Cardiac septum (tissue), 1 donor: ENCODE measurements at regions of chr6 and their contacts with region 1.

Region 1: GRCh38 chr6:17932330-17932852 is 55.0 kb downstream of the KIF13A start:
- DNase-seq: peak; percentile 79

Region 2: GRCh38 chr6:17865798-17866725 is 66.3 kb before region 1 on chr6:
- intact Hi-C with region 1: loop called (anchors 5 kb)
- DNase-seq: peak; percentile 85

Region 3: DNA sequence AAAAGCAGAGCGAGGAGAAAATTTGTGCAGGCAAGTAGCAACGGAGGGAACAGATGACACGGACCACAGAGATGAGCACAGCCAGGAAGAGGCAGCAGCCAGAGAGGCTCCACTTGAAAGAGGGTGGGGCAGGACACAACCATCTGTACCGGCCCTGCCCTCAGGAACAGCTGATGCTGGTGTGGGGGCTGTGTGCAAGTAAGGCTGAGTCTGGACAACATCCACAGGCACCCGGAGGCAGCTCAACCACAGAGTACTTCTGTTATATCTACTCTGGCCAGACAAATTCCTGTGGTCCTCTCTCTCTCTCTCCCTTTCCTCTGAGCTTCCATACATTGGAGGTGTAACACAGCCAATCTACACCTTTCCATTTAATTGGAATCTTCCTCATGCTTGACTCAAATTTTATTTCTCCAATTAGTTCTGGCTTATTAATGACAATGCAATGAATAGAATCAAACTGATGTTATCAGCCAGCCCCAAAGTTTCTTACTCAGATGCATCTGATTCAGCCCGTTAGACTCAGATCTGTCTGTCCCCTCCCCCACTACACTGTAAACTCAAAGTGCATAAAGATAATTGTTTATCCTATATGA is 30.1 kb after region 1 on chr6:
- intact Hi-C with region 1: loop called (anchors 2 kb)
- DNase-seq: peak; percentile 90